ENCODE measurements at regions of chr13 and their contacts with region 1.

Region 1: DNA sequence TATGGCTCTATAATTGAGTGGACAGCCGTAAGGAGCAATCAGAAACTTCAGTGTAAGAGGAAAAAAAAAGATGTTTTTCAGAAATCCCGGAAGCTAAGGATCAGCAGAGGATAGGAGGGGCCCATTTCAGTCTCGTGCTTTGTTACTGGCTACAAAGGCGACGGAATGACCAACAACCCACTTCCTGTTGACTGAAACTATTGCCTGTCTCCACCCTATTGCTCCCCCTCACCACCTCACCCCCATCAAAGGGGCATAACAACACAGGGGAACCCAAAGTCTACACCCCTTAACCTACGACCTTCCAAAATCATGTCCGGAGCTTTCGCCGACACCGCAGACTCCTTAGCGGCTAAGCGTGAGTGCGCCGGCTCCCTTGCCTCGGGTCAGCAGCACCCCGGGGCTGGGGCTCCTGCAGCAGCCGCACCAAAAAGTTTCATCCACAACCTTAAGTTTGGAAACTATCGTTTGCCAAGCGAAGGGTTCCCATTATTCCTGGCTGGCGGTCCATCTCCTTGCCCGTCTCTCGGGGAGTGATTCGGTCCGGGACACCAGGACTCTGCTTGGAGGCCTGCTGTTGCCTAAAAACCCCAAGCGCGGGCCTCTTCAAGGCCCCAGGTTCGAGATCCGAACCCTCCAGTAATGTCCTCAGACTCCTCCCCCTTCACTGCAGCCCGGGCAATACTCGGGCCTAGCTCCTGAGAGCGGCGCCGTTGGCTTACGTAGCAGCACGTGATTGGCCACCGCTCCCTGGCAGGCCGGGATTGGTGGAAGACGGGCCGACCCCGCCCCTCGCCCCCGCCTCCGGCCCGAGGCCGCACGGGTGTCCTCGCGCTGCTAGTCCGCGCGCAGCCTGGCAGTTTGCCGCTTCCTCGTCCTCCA is at the start of gene TPP2:
- DNase-seq: peak; percentile 96 to 100 (median 98)
- ATAC-seq: peak; percentile 83
- H3K4me3 ChIP-seq: peak within 1 kb of the TSS; percentile 72 to 98
- H3K4me3 Mint-ChIP-seq: peak within 1 kb of the TSS; percentile 98
- H3K27ac ChIP-seq: peak within 1 kb of the TSS; percentile 98 to 100
- H3K27ac Mint-ChIP-seq: peak within 1 kb of the TSS; percentile 100
- H3K4me1 ChIP-seq: peaks cover 44% of the 10 kb centered on the region
- H3K4me1 Mint-ChIP-seq: peaks cover 68% of the 10 kb centered on the region
- H3K27me3 ChIP-seq: no peaks in the 10 kb centered on the region
- H3K27me3 Mint-ChIP-seq: no peaks in the 10 kb centered on the region
- CTCF ChIP-seq: no peak
- total RNA-seq, gene TPP2: 168 to 185 TPM

Region 2: GRCh38 chr13:102394158-102395053 is 202.0 kb before region 1 on chr13:
- CTCF ChIA-PET with region 1: no interaction called
- POLR2A ChIA-PET with region 1: interaction called, 7 read pairs
- intact Hi-C with region 1: loop called (anchors 1 to 5 kb)
- DNase-seq: peak; percentile 88 to 98 (median 97)
- ATAC-seq: peak; percentile 90
- H3K4me3 ChIP-seq: peak overlapping the region; percentile 79 to 96
- H3K4me3 Mint-ChIP-seq: peak overlapping the region; percentile 88
- H3K27ac ChIP-seq: peak overlapping the region; percentile 65 to 76
- H3K27ac Mint-ChIP-seq: peak overlapping the region; percentile 82
- H3K4me1 ChIP-seq: peaks cover 14% of the 10 kb centered on the region
- H3K4me1 Mint-ChIP-seq: peaks cover 8% of the 10 kb centered on the region
- H3K27me3 ChIP-seq: peaks cover 1 to 2% of the 10 kb centered on the region in 2 experiments
- H3K27me3 Mint-ChIP-seq: peaks cover 12% of the 10 kb centered on the region
- CTCF ChIP-seq: no peak

Region 3: DNA sequence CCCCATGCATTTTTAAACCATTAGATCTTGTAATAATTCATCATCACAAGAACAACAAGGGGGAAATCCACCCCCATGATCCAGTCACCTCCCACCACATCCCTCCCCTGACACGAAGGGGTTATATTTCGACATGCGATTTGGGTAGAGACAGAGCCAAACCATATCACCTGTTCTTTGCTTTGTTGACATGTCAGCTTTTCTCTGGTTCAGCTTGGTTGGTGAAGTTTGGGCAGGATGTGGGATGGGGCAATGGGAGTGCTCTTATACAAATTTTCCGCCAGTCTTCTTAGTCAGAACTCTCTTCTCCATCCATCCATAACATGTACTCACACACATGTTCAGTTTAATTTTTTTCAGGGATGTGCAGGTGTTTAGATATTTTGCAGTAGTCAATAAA is 13.3 kb after region 1 on chr13:
- CTCF ChIA-PET with region 1: interaction called, 67 read pairs
- POLR2A ChIA-PET with region 1: interaction called, 23 read pairs
- intact Hi-C with region 1: loop called (anchors 1 to 2 kb)
- DNase-seq: peak in 2 of 9 experiments; percentile 35 to 52
- ATAC-seq: peak; percentile 62
- H3K4me3 ChIP-seq: no peak overlapping the region
- H3K4me3 Mint-ChIP-seq: peak overlapping the region; percentile 0
- H3K27ac ChIP-seq: no peak overlapping the region
- H3K27ac Mint-ChIP-seq: peak overlapping the region; percentile 49
- H3K4me1 ChIP-seq: peaks cover 38% of the 10 kb centered on the region
- H3K4me1 Mint-ChIP-seq: peaks cover 69% of the 10 kb centered on the region
- H3K27me3 ChIP-seq: no peaks in the 10 kb centered on the region
- H3K27me3 Mint-ChIP-seq: no peaks in the 10 kb centered on the region
- CTCF ChIP-seq: no peak

Region 4: GRCh38 chr13:102631198-102631597 is 34.8 kb after region 1 on chr13:
- CTCF ChIA-PET with region 1: interaction called, 9 read pairs
- POLR2A ChIA-PET with region 1: interaction called, 4 read pairs
- intact Hi-C with region 1: loop called in 1 of 2 experiments (anchors 5 kb)
- DNase-seq: no peak
- ATAC-seq: no peak
- H3K4me3 ChIP-seq: no peak overlapping the region
- H3K4me3 Mint-ChIP-seq: no peak overlapping the region
- H3K27ac ChIP-seq: no peak overlapping the region
- H3K27ac Mint-ChIP-seq: no peak overlapping the region
- H3K4me1 ChIP-seq: no peaks in the 10 kb centered on the region
- H3K4me1 Mint-ChIP-seq: peaks cover 3% of the 10 kb centered on the region
- H3K27me3 ChIP-seq: no peaks in the 10 kb centered on the region
- H3K27me3 Mint-ChIP-seq: no peaks in the 10 kb centered on the region
- CTCF ChIP-seq: no peak

Region 5: GRCh38 chr13:102651892-102652291 is 55.5 kb after region 1 on chr13:
- CTCF ChIA-PET with region 1: interaction called, 16 read pairs
- POLR2A ChIA-PET with region 1: interaction called, 6 read pairs
- intact Hi-C with region 1: loop called in 1 of 2 experiments (anchors 5 kb)
- DNase-seq: no peak
- ATAC-seq: no peak
- H3K4me3 ChIP-seq: no peak overlapping the region
- H3K4me3 Mint-ChIP-seq: no peak overlapping the region
- H3K27ac ChIP-seq: no peak overlapping the region
- H3K27ac Mint-ChIP-seq: no peak overlapping the region
- H3K4me1 ChIP-seq: no peaks in the 10 kb centered on the region
- H3K4me1 Mint-ChIP-seq: peaks cover 5% of the 10 kb centered on the region
- H3K27me3 ChIP-seq: no peaks in the 10 kb centered on the region
- H3K27me3 Mint-ChIP-seq: no peaks in the 10 kb centered on the region
- CTCF ChIP-seq: no peak

Region 6: DNA sequence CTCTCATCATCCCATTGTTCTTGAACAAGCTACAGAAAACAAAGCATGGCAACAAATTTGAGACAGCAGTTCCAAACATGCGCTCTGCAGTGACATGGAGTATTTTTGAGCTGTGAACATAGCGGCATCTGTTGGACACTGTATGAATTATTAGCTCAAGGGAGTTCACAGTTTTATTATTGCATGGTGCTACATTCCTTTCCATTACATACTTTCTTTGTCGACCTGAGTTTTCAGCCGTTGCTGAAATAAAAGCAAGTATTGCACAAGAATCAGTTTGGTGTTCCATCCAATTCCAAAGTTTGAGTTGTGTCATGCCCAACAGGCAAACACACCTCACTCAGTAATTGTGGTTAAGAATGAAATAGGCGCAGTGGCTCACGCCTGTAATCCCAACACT is 128.5 kb after region 1 on chr13:
- CTCF ChIA-PET with region 1: interaction called, 10 read pairs
- POLR2A ChIA-PET with region 1: no interaction called
- intact Hi-C with region 1: no loop called
- DNase-seq: peak in 2 of 9 experiments; percentile 21 to 46
- ATAC-seq: no peak
- H3K4me3 ChIP-seq: no peak overlapping the region
- H3K4me3 Mint-ChIP-seq: no peak overlapping the region
- H3K27ac ChIP-seq: no peak overlapping the region
- H3K27ac Mint-ChIP-seq: no peak overlapping the region
- H3K4me1 ChIP-seq: no peaks in the 10 kb centered on the region
- H3K4me1 Mint-ChIP-seq: peaks cover 2% of the 10 kb centered on the region
- H3K27me3 ChIP-seq: peaks cover 0 to 2% of the 10 kb centered on the region in 2 experiments
- H3K27me3 Mint-ChIP-seq: peaks cover 8% of the 10 kb centered on the region
- CTCF ChIP-seq: no peak

Region 7: GRCh38 chr13:102800145-102801041 is 204.0 kb after region 1 on chr13:
- CTCF ChIA-PET with region 1: interaction called, 13 read pairs
- POLR2A ChIA-PET with region 1: interaction called, 8 read pairs
- intact Hi-C with region 1: loop called in 1 of 2 experiments (anchors 1 kb)
- DNase-seq: peak; percentile 65 to 89 (median 84)
- ATAC-seq: peak; percentile 77
- H3K4me3 ChIP-seq: peak overlapping the region; percentile 62 to 86
- H3K4me3 Mint-ChIP-seq: peak overlapping the region; percentile 92
- H3K27ac ChIP-seq: peak overlapping the region; percentile 36 to 44
- H3K27ac Mint-ChIP-seq: peak overlapping the region; percentile 74
- H3K4me1 ChIP-seq: peaks cover 10% of the 10 kb centered on the region
- H3K4me1 Mint-ChIP-seq: peaks cover 30% of the 10 kb centered on the region
- H3K27me3 ChIP-seq: peaks cover 0 to 5% of the 10 kb centered on the region in 2 experiments
- H3K27me3 Mint-ChIP-seq: peaks cover 11% of the 10 kb centered on the region
- CTCF ChIP-seq: peak; percentile 64

Measured in CD8-positive, alpha-beta T cell (primary cell).